Activated B cell treated with CpG ODN at 0.5 μM for 24 hours (primary cell): ENCODE measurements at regions of chr11 and their contacts with region 1.

Region 1: GRCh38 chr11:44611687-44612434 is 46.4 kb downstream of the CD82 start:
- DNase-seq: peak; percentile 67
- ATAC-seq: peak; percentile 44
- H3K4me3 Mint-ChIP-seq: peak overlapping the region; percentile 26
- H3K27ac Mint-ChIP-seq: peak overlapping the region; percentile 97
- H3K4me1 Mint-ChIP-seq: peaks cover 100% of the 10 kb centered on the region
- H3K27me3 Mint-ChIP-seq: no peaks in the 10 kb centered on the region
- CTCF ChIP-seq: no peak

Region 2: DNA sequence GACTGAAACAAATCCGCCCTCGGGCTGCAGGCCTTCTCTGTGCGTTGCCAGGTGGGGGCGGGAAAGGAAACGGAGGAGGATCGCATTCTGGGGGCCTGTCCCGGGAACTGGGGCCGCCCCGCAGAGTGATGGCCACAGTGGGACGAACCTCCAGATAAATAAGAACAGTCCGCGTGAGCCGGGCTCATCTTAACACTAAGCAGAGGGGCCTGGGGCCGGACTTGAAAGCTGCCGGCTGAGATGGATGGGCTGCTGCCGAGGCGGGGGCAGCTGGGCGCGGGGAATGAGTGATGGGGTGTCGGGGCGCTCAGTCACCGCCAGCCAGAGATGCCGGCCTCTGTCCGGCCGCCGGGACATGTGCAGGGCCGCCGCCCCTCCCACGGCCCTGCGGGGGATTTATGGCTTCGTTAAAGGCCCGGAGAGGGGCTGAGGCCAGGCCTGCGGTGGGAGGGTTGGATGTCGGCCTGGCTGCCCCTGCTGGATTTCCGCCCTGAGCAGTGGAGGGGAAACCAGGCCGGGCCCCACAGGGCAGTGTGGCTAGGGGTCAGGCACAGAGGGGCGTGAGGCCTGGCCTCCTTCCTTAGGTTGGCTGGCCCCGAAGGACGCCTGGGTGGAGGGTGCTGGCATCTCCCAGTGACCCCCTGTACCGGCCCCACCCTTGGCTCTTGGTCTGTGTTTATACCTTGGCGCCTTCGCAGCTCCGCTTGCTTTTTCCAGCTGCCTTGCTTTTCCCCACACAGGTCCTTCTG is 91.7 kb before region 1 on chr11:
- CTCF ChIA-PET with region 1: interaction called, 32 read pairs
- POLR2A ChIA-PET with region 1: interaction called, 11 read pairs
- intact Hi-C with region 1: loop called (anchors 1 kb)
- DNase-seq: no peak
- ATAC-seq: no peak
- H3K4me3 Mint-ChIP-seq: no peak overlapping the region
- H3K27ac Mint-ChIP-seq: no peak overlapping the region
- H3K4me1 Mint-ChIP-seq: no peaks in the 10 kb centered on the region
- H3K27me3 Mint-ChIP-seq: peaks cover 30% of the 10 kb centered on the region
- CTCF ChIP-seq: no peak

Region 3: DNA sequence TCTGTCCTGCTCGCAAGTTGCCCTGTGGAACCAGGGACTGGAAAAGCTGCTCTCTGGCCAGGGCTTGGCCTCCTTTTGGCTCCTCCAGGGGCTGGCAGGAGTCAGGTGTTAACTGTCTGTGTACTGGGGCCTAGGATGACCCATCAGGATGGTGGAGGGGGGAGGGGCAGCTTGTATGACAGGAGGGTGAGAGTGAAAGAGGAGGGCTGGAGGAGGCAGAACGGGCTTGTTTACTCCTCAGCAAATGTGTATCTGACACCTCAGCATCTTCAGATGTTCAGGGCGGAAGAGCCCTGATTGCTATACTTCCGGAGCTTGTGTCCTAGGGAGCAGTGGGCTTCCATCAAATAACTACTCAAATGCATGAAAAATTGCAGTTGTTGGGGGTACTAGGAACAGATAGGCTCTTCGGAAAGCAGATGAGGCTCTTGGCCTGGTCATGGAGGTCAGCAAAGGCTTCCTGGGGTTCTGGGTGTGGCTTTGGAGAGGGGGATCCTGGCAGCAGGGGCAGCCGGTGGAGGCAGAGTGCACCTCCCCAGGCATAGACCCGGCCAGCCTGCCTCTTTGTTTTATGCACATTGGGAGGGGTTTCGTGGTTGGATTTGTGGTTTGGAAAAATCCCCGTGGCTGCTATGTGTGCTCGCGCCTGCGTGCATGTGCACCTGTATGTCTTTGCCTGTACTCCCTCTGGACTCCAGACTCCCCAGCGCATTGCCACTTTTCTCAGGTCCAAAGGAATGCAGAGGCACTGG is 15.2 kb before region 1 on chr11:
- CTCF ChIA-PET with region 1: interaction called, 38 read pairs
- POLR2A ChIA-PET with region 1: interaction called, 465 read pairs
- intact Hi-C with region 1: loop called (anchors 1 kb)
- DNase-seq: peak; percentile 69
- ATAC-seq: peak; percentile 30
- H3K4me3 Mint-ChIP-seq: peak overlapping the region; percentile 82
- H3K27ac Mint-ChIP-seq: peak overlapping the region; percentile 94
- H3K4me1 Mint-ChIP-seq: peaks cover 95% of the 10 kb centered on the region
- H3K27me3 Mint-ChIP-seq: no peaks in the 10 kb centered on the region
- CTCF ChIP-seq: no peak

Region 4: DNA sequence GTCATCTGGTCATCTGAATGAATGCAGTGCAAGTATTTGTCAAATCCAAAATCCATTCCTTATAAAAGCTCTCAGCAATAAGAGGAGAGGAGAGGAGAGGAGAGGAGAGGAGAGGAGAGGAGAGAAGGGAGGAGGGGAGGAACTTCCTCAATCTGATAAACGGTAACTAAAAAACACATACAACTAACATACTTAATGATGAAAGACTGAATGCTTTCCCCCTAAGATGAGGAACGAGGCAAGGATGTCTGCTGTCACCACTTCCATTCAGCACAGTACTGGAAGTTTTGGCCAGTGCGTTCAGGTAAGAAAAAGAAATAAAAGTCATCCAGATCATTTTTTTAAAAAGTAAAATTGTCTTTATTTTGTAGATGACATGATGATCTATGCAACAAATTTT is 34.0 kb after region 1 on chr11:
- CTCF ChIA-PET with region 1: no interaction called
- POLR2A ChIA-PET with region 1: no interaction called
- intact Hi-C with region 1: no loop called
- DNase-seq: no peak
- ATAC-seq: no peak
- H3K4me3 Mint-ChIP-seq: no peak overlapping the region
- H3K27ac Mint-ChIP-seq: no peak overlapping the region
- H3K4me1 Mint-ChIP-seq: no peaks in the 10 kb centered on the region
- H3K27me3 Mint-ChIP-seq: peaks cover 23% of the 10 kb centered on the region
- CTCF ChIP-seq: no peak

Region 5: GRCh38 chr11:44737245-44738085 is 125.6 kb after region 1 on chr11:
- CTCF ChIA-PET with region 1: no interaction called
- POLR2A ChIA-PET with region 1: no interaction called
- intact Hi-C with region 1: no loop called
- DNase-seq: no peak
- ATAC-seq: no peak
- H3K4me3 Mint-ChIP-seq: no peak overlapping the region
- H3K27ac Mint-ChIP-seq: no peak overlapping the region
- H3K4me1 Mint-ChIP-seq: no peaks in the 10 kb centered on the region
- H3K27me3 Mint-ChIP-seq: peaks cover 7% of the 10 kb centered on the region
- CTCF ChIP-seq: no peak

Region 6: GRCh38 chr11:44943118-44943517 is 331.3 kb after region 1 on chr11:
- CTCF ChIA-PET with region 1: no interaction called
- POLR2A ChIA-PET with region 1: interaction called, 5 read pairs
- intact Hi-C with region 1: loop called (anchors 1 kb)
- DNase-seq: peak; percentile 74
- ATAC-seq: peak; percentile 94
- H3K4me3 Mint-ChIP-seq: peak overlapping the region; percentile 76
- H3K27ac Mint-ChIP-seq: peak overlapping the region; percentile 80
- H3K4me1 Mint-ChIP-seq: peaks cover 92% of the 10 kb centered on the region
- H3K27me3 Mint-ChIP-seq: no peaks in the 10 kb centered on the region
- CTCF ChIP-seq: no peak

Region 7: GRCh38 chr11:45079943-45080719 is 468.3 kb after region 1 on chr11:
- CTCF ChIA-PET with region 1: no interaction called
- POLR2A ChIA-PET with region 1: no interaction called
- intact Hi-C with region 1: loop called (anchors 5 kb)
- DNase-seq: peak; percentile 45
- ATAC-seq: peak; percentile 71
- H3K4me3 Mint-ChIP-seq: peak overlapping the region; percentile 59
- H3K27ac Mint-ChIP-seq: peak overlapping the region; percentile 84
- H3K4me1 Mint-ChIP-seq: peaks cover 71% of the 10 kb centered on the region
- H3K27me3 Mint-ChIP-seq: no peaks in the 10 kb centered on the region
- CTCF ChIP-seq: no peak

Region 8: DNA sequence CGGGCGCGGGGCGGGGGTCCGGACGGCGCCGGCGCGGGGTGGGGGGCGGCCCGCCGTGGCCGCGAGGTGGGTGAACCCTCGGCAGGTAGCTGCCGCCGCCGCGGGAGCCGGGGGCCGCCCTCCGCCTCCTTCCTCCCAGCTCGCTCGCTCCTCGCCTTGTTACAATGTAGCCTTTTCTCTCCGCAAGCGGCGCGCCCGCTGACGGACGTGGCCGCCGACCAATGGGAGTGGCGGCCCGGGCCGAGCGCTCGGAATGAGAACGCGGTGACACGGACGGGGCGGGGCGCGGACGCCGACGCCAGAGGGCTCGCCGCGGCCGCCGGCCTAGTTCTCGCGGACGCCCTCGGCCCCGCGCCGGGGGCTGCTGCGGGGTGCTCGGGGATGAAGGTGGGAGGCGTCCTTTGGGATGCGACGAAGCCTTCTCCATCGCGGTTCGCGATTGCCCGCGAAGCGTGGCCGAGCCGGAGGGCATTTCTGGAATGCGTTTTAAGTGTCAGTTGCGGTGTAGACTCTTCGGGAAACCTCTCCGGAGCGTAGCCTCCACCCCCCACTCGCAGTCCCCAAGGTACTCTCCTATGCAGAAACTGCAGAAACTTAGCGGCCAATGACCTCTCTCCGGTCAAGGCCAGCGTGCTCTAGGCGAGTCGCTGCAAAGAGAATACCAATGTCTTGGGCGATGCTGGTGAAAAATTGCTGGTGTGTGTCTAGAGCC is 535.3 kb after region 1 on chr11:
- CTCF ChIA-PET with region 1: no interaction called
- POLR2A ChIA-PET with region 1: no interaction called
- intact Hi-C with region 1: loop called (anchors 2 kb)
- DNase-seq: peak; percentile 92
- ATAC-seq: peak; percentile 98
- H3K4me3 Mint-ChIP-seq: peak overlapping the region; percentile 87
- H3K27ac Mint-ChIP-seq: peak overlapping the region; percentile 77
- H3K4me1 Mint-ChIP-seq: peaks cover 33% of the 10 kb centered on the region
- H3K27me3 Mint-ChIP-seq: peaks cover 7% of the 10 kb centered on the region
- CTCF ChIP-seq: no peak